A673 (cell line): ENCODE measurements at regions of chr7 and their contacts with region 1.

Region 1: GRCh38 chr7:24979863-24980533 is at the start of gene OSBPL3:
- DNase-seq: peak; percentile 97
- H3K4me3 ChIP-seq: peak within 1 kb of the TSS; percentile 82
- H3K27ac ChIP-seq: peak within 1 kb of the TSS; percentile 76
- H3K4me1 ChIP-seq: peaks cover 16% of the 10 kb centered on the region
- H3K27me3 ChIP-seq: no peaks in the 10 kb centered on the region
- CTCF ChIP-seq: no peak
- total RNA-seq, gene OSBPL3: 17.1 and 21.4 TPM in 2 replicates

Region 2: GRCh38 chr7:24819916-24820689 is 159.9 kb before region 1 on chr7:
- CTCF ChIA-PET with region 1: no interaction called
- POLR2A ChIA-PET with region 1: no interaction called
- intact Hi-C with region 1: loop called (anchors 2 kb)
- DNase-seq: peak; percentile 87
- H3K4me3 ChIP-seq: no peak overlapping the region
- H3K27ac ChIP-seq: no peak overlapping the region
- H3K4me1 ChIP-seq: peaks cover 27% of the 10 kb centered on the region
- H3K27me3 ChIP-seq: no peaks in the 10 kb centered on the region
- CTCF ChIP-seq: peak; percentile 92